Aorta (tissue), 5 donors: ENCODE measurements at regions of chr10 and their contacts with region 1.

Region 1: GRCh38 chr10:61733358-61733940 is 70.7 kb downstream of the CABCOCO1 start:
- DNase-seq: no peak
- ATAC-seq: no peak
- H3K4me3 ChIP-seq: no peak overlapping the region
- H3K27ac ChIP-seq: no peak overlapping the region
- H3K4me1 ChIP-seq: no peaks in the 10 kb centered on the region
- H3K27me3 ChIP-seq: no peaks in the 10 kb centered on the region

Region 2: GRCh38 chr10:60816628-60817397 is 916.6 kb before region 1 on chr10:
- intact Hi-C with region 1: loop called (anchors 10 kb)
- DNase-seq: no peak
- ATAC-seq: peak; percentile 92
- H3K4me3 ChIP-seq: no peak overlapping the region
- H3K27ac ChIP-seq: no peak overlapping the region
- H3K4me1 ChIP-seq: peaks cover 0 to 4% of the 10 kb centered on the region in 2 donors
- H3K27me3 ChIP-seq: no peaks in the 10 kb centered on the region

Region 3: GRCh38 chr10:61140765-61141392 is 592.6 kb before region 1 on chr10:
- intact Hi-C with region 1: loop called in 1 of 2 experiments (anchors 10 kb)
- DNase-seq: no peak
- ATAC-seq: peak; percentile 69
- H3K4me3 ChIP-seq: no peak overlapping the region
- H3K27ac ChIP-seq: no peak overlapping the region
- H3K4me1 ChIP-seq: no peaks in the 10 kb centered on the region
- H3K27me3 ChIP-seq: no peaks in the 10 kb centered on the region